A549 (cell line): ENCODE measurements at regions of chr20 and their contacts with region 1.

Region 1: DNA sequence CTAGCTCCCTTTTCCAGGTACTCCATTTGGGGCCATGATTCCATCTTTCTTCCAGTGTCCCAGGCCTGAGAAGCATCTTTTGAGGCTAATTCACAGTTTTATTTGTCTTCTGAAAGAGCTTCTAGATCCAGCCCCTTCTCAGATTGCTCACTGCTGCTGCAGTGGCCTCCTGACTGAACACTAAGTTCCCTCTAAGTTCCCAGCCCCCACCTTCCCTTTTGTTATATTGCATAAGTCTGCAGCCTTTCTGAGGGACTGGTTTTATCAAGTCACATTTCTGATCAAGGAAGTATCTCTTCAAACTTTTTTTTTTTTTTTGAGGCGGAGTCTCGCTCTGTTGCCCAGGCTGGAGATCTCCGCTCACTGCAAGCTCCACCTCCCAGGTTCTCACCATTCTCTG is 10.7 kb downstream of the MAPRE1 start:
- DNase-seq: peak in 1 of 2 experiments; percentile 20
- ATAC-seq: no peak
- H3K4me3 ChIP-seq: no peak overlapping the region
- H3K27ac ChIP-seq: no peak overlapping the region
- H3K4me1 ChIP-seq: peaks cover 9% of the 10 kb centered on the region; the same call in 2 of the 3 replicates
- CTCF ChIP-seq: no peak
- EP300 ChIP-seq: no peak
- POLR2A ChIP-seq: no peak
- RAD21 ChIP-seq: no peak

Region 2: DNA sequence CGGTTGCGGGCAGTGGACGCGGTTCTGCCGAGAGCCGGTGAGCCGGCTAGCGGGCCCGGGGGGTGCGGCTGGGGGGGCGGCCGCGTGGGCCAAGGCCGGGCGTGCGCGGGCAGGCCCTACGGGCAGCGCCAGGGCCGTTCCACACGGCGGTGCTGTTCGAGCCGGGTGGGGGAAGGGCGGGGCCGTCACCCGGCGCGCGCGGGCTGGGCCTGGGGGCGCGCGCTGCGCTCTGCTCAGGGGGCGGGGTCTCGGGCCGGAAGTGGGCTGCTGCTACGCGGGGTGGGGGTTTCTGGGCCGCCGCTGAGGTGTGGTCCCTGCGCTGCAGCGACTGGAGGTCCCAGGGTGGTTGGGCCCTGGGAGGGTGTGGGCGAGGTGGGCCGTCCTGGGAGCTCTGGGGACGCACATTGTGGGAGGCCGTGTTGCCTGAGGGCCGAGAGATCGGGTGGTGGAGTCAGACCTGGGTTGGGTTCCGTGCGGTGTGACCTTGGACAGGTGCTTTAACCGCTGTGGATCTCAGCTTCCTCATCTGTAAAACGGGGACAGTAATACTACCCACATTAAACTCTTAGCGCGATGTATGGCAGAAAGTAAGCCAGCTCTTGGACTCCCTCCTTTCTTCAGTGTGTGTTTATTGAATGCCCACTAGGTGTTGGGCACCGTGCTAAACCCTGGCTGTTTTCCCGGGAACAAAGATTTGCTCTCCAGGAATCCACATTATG is 10.3 kb before region 1 on chr20:
- CTCF ChIA-PET with region 1: no interaction called
- POLR2A ChIA-PET with region 1: interaction called, 17 read pairs
- DNase-seq: peak; percentile 36 to 67
- ATAC-seq: peak; percentile 83 to 84
- H3K4me3 ChIP-seq: peak overlapping the region; percentile 59
- H3K27ac ChIP-seq: peak overlapping the region; percentile 90 to 96
- H3K4me1 ChIP-seq: peaks cover 35% of the 10 kb centered on the region
- CTCF ChIP-seq: no peak
- EP300 ChIP-seq: no peak
- POLR2A ChIP-seq: peak; percentile 21; the same call in 1 of the 2 replicates
- RAD21 ChIP-seq: no peak